Sigmoid colon (tissue), 7 donors: ENCODE measurements at regions of chr5 and their contacts with region 1.

Region 1: GRCh38 chr5:88140856-88141752 is 127.5 kb downstream of the TMEM161B start:
- DNase-seq: peak; percentile 99
- H3K4me3 ChIP-seq: peak overlapping the region; percentile 33 to 54 (median 48)
- H3K27ac ChIP-seq: peak overlapping the region; percentile 44 to 60 (median 45)
- H3K4me1 ChIP-seq: peaks cover 0 to 48% (median 39%) of the 10 kb centered on the region in 4 donors
- H3K27me3 ChIP-seq: peaks cover 7 to 84% (median 14%) of the 10 kb centered on the region in 3 donors
- CTCF ChIP-seq: peak in 2 of 4 experiments; percentile 13 to 68
- EP300 ChIP-seq: no peak
- POLR2A ChIP-seq: peak in 1 of 2 donors; percentile 24

Region 2: DNA sequence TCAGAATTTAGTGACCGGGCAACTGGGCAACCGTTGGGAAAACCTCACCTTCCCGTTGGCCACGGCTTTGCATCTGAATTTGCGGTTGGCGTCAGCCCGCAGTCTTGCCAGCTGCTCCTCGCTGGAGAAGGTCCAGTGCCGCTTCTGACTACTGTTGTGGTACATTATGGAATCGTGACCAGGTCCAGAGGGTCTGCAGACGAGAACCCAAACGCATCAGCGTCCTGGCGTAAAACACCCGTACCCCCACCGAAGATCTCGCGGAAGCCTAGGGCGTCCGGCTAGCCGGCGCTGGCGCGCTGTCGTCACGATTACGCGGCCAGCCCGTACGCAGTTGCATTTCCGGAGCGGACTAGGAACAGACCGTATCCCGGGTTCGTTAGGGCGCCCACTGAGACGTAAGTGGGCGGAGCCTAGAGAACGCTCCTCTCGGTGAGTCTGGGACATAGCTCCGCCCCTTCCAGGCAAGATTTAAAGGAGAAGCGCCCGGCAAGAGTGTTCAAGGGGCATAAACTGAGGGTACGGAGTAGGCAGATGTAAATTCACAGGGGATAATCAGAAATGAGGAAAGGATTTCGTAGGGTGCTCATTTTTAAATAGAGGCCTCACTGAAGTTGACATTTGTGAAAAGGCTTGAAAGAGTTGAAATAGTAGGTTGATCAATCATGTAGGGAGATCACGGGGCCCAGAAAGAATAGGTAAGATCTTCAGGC is 728.3 kb before region 1 on chr5 and contains the start of gene CCNH:
- intact Hi-C with region 1: loop called (anchors 10 kb)
- DNase-seq: peak; percentile 99
- H3K4me3 ChIP-seq: peak within 1 kb of the TSS; percentile 55 to 83 (median 74)
- H3K27ac ChIP-seq: peak within 1 kb of the TSS; percentile 94 to 98 (median 96)
- H3K4me1 ChIP-seq: peaks cover 0 to 20% (median 14%) of the 10 kb centered on the region in 4 donors
- H3K27me3 ChIP-seq: no peaks in the 10 kb centered on the region
- CTCF ChIP-seq: no peak
- EP300 ChIP-seq: peak; percentile 64 to 97 (median 85)
- POLR2A ChIP-seq: peak; percentile 91 to 95
- total RNA-seq, gene CCNH: 79.2 to 92.7 (median 89.1) TPM

Region 3: GRCh38 chr5:87780831-87781760 is 360.0 kb before region 1 on chr5:
- intact Hi-C with region 1: loop called (anchors 5 kb)
- DNase-seq: peak; percentile 86
- H3K4me3 ChIP-seq: no peak overlapping the region
- H3K27ac ChIP-seq: no peak overlapping the region
- H3K4me1 ChIP-seq: no peaks in the 10 kb centered on the region
- H3K27me3 ChIP-seq: peaks cover 0 to 28% (median 5%) of the 10 kb centered on the region in 3 donors
- CTCF ChIP-seq: peak; percentile 55 to 91 (median 78)
- EP300 ChIP-seq: no peak
- POLR2A ChIP-seq: no peak

Region 4: GRCh38 chr5:88268385-88269184 is 127.5 kb after region 1 on chr5 and contains the start of gene TMEM161B:
- intact Hi-C with region 1: loop called (anchors 5 kb)
- DNase-seq: peak; percentile 94
- H3K4me3 ChIP-seq: peak within 1 kb of the TSS; percentile 64 to 81 (median 80)
- H3K27ac ChIP-seq: peak within 1 kb of the TSS; percentile 73 to 77 (median 76)
- H3K4me1 ChIP-seq: peaks cover 0 to 29% (median 26%) of the 10 kb centered on the region in 4 donors
- H3K27me3 ChIP-seq: no peaks in the 10 kb centered on the region
- CTCF ChIP-seq: no peak
- EP300 ChIP-seq: no peak
- POLR2A ChIP-seq: peak; percentile 17 to 26
- total RNA-seq, gene TMEM161B: 15.0 to 22.1 (median 17.0) TPM

Region 5: GRCh38 chr5:88489364-88489763 is 348.3 kb after region 1 on chr5:
- intact Hi-C with region 1: no loop called
- DNase-seq: no peak
- H3K4me3 ChIP-seq: no peak overlapping the region
- H3K27ac ChIP-seq: no peak overlapping the region
- H3K4me1 ChIP-seq: no peaks in the 10 kb centered on the region
- H3K27me3 ChIP-seq: no peaks in the 10 kb centered on the region
- CTCF ChIP-seq: no peak
- EP300 ChIP-seq: no peak
- POLR2A ChIP-seq: no peak

Region 6: GRCh38 chr5:88680253-88681132 is 539.4 kb after region 1 on chr5:
- intact Hi-C with region 1: loop called (anchors 2 kb)
- DNase-seq: no peak
- H3K4me3 ChIP-seq: peak overlapping the region; percentile 23 to 45 (median 40)
- H3K27ac ChIP-seq: no peak overlapping the region
- H3K4me1 ChIP-seq: peaks cover 0 to 32% (median 18%) of the 10 kb centered on the region in 4 donors
- H3K27me3 ChIP-seq: peaks cover 80 to 100% (median 98%) of the 10 kb centered on the region in 3 donors
- CTCF ChIP-seq: peak; percentile 42 to 93 (median 69)
- EP300 ChIP-seq: no peak
- POLR2A ChIP-seq: no peak